Ascending aorta (tissue), 2 donors: ENCODE measurements at regions of chr16 and their contacts with region 1.

Region 1: GRCh38 chr16:66406534-66407221 is 20.4 kb upstream of the BEAN1 start:
- DNase-seq: peak in 1 of 2 donors; percentile 92
- H3K4me3 ChIP-seq: peak overlapping the region; percentile 65 to 69
- H3K27ac ChIP-seq: no peak overlapping the region
- H3K4me1 ChIP-seq: peaks cover 0 to 5% of the 10 kb centered on the region in 2 donors
- H3K27me3 ChIP-seq: no peaks in the 10 kb centered on the region
- CTCF ChIP-seq: peak; percentile 82 to 91 (median 87)

Region 2: GRCh38 chr16:66588981-66589713 is 182.5 kb after region 1 on chr16:
- intact Hi-C with region 1: loop called (anchors 1 kb)
- DNase-seq: no peak
- H3K4me3 ChIP-seq: no peak overlapping the region
- H3K27ac ChIP-seq: no peak overlapping the region
- H3K4me1 ChIP-seq: no peaks in the 10 kb centered on the region
- H3K27me3 ChIP-seq: no peaks in the 10 kb centered on the region
- CTCF ChIP-seq: peak; percentile 35 to 72 (median 54)

Region 3: GRCh38 chr16:66728117-66728787 is 321.6 kb after region 1 on chr16:
- intact Hi-C with region 1: loop called (anchors 2 kb)
- DNase-seq: no peak
- H3K4me3 ChIP-seq: no peak overlapping the region
- H3K27ac ChIP-seq: no peak overlapping the region
- H3K4me1 ChIP-seq: no peaks in the 10 kb centered on the region
- H3K27me3 ChIP-seq: no peaks in the 10 kb centered on the region
- CTCF ChIP-seq: peak; percentile 44 to 66 (median 46)